Ovary (tissue), 10 donors: ENCODE measurements at regions of chr15 and their contacts with region 1.

Region 1: GRCh38 chr15:90001683-90002427 is 731 bp downstream of the ZNF710 start:
- DNase-seq: peak; percentile 61 to 78 (median 73)
- H3K4me3 ChIP-seq: peak overlapping the region; percentile 87
- H3K27ac ChIP-seq: peak overlapping the region; percentile 86 to 92
- H3K4me1 ChIP-seq: peaks cover 9% of the 10 kb centered on the region
- H3K27me3 ChIP-seq: no peaks in the 10 kb centered on the region
- CTCF ChIP-seq: no peak
- EP300 ChIP-seq: no peak
- POLR2A ChIP-seq: no peak

Region 2: GRCh38 chr15:89912674-89913396 is 89.0 kb before region 1 on chr15 and contains the start of gene ARPIN:
- intact Hi-C with region 1: loop called in 1 of 4 experiments (anchors 5 kb)
- DNase-seq: peak; percentile 46 to 75 (median 53)
- H3K4me3 ChIP-seq: peak within 1 kb of the TSS; percentile 97
- H3K27ac ChIP-seq: peak within 1 kb of the TSS; percentile 32 to 64
- H3K4me1 ChIP-seq: peaks cover 4% of the 10 kb centered on the region
- H3K27me3 ChIP-seq: no peaks in the 10 kb centered on the region
- CTCF ChIP-seq: peak in 1 of 3 donors; percentile 20
- EP300 ChIP-seq: no peak
- POLR2A ChIP-seq: no peak
- total RNA-seq, gene ARPIN: 14.2 to 36.5 (median 30.8) TPM

Region 3: DNA sequence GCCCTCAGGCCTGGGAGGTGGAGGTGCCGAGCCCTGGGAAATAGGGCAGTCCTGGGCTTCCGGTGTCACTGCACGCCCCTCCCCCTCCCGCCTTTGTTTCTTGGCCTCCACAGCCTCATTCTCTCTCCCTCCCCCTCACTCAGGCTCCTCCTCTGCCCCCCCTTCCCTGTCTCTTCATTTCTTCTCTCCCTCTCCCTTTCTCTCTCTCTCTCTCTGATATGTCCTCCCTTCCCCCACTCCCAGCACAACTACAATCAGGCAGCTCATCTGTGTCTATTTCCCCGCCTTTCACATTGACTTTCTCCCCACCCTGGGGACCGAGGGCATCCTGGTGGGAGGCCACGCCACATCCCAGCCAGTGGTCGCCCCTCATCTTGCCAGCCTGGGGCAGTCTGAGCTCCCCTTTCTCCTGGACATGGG is 60.2 kb after region 1 on chr15:
- intact Hi-C with region 1: loop called in 1 of 4 experiments (anchors 10 kb)
- DNase-seq: peak; percentile 61 to 74 (median 65)
- H3K4me3 ChIP-seq: no peak overlapping the region
- H3K27ac ChIP-seq: no peak overlapping the region
- H3K4me1 ChIP-seq: peaks cover 8% of the 10 kb centered on the region
- H3K27me3 ChIP-seq: no peaks in the 10 kb centered on the region
- CTCF ChIP-seq: no peak
- EP300 ChIP-seq: no peak
- POLR2A ChIP-seq: no peak